H1 (cell line): ENCODE measurements at regions of chr12 and their contacts with region 1.

Region 1: DNA sequence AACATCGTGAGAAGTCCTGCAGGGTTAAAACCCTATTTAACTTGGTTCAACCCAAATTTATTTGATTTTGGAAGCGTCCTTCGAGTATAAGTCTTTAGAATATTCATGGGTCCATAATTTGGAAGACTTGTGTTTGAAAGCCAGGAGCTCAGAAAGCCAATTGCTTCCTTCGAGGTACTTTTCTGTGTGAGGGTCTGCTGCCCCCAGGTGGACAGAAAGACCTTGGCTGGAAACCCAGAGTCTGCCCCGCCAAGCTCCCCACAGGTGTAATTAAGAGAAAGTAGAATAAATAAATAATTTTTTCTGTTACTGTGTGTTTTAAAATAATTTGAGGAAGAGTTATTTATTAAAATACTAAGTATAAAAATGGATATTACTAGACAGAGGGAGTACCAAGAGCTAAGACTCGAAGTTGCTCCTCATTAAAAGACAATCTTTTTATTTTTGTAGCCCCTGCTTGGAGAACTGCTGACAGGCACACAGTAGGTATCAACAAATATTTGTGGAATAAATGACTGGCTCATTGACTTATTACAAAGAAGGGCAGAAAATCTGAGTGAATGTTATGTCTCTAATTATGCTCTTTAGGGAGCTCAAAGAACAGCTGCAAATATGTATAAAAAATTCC is 105.8 kb downstream of the PAH start:
- DNase-seq: peak in 1 of 2 experiments; percentile 66
- H3K4me3 ChIP-seq: no peak overlapping the region
- H3K27ac ChIP-seq: no peak overlapping the region
- H3K4me1 ChIP-seq: peaks cover 0 to 3% (median 1%) of the 10 kb centered on the region in 4 experiments; a peak in 4 of 7 replicates
- H3K27me3 ChIP-seq: no peaks in the 10 kb centered on the region
- CTCF ChIP-seq: peak; percentile 61 to 75 (median 61)
- EP300 ChIP-seq: no peak
- POLR2A ChIP-seq: no peak
- RAD21 ChIP-seq: peak; percentile 87 to 89

Region 2: DNA sequence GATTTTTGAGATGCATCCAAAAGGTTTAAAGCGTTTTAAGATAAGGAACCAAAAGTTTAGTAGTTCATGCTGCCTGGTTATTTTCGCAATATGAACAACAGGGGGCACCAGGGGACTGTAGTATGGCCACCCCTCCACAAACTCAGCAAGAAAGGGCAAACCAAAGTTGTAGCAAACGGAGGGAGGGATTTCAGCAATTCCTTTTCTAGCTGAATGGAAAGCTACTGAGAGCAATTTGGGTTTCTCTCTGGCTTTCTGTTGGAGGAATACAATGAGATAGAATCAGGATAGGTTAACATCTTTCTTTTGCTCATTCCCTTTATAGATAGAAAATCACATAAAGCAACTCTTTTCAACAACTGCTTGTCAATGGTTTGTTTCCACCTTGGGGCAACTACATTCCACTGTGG is 871.4 kb before region 1 on chr12:
- CTCF ChIA-PET with region 1: interaction called, 24 read pairs
- POLR2A ChIA-PET with region 1: no interaction called
- DNase-seq: peak; percentile 41 to 55
- H3K4me3 ChIP-seq: no peak overlapping the region
- H3K27ac ChIP-seq: no peak overlapping the region
- H3K4me1 ChIP-seq: no peaks in the 10 kb centered on the region
- H3K27me3 ChIP-seq: no peaks in the 10 kb centered on the region; a peak in 1 of 7 replicates
- CTCF ChIP-seq: peak; percentile 36 to 79 (median 79)
- EP300 ChIP-seq: no peak
- POLR2A ChIP-seq: no peak
- RAD21 ChIP-seq: peak; percentile 94 to 95

Region 3: GRCh38 chr12:102643879-102644575 is 167.2 kb before region 1 on chr12:
- CTCF ChIA-PET with region 1: no interaction called
- POLR2A ChIA-PET with region 1: no interaction called
- DNase-seq: no peak
- H3K4me3 ChIP-seq: no peak overlapping the region
- H3K27ac ChIP-seq: no peak overlapping the region
- H3K4me1 ChIP-seq: peaks cover 0 to 3% (median 0%) of the 10 kb centered on the region in 4 experiments; a peak in 1 of 7 replicates
- H3K27me3 ChIP-seq: no peaks in the 10 kb centered on the region
- CTCF ChIP-seq: no peak
- EP300 ChIP-seq: no peak
- POLR2A ChIP-seq: no peak
- RAD21 ChIP-seq: no peak

Region 4: GRCh38 chr12:102763061-102763460 is 48.2 kb before region 1 on chr12:
- CTCF ChIA-PET with region 1: interaction called, 10 read pairs
- POLR2A ChIA-PET with region 1: no interaction called
- DNase-seq: no peak
- H3K4me3 ChIP-seq: no peak overlapping the region
- H3K27ac ChIP-seq: no peak overlapping the region
- H3K4me1 ChIP-seq: no peaks in the 10 kb centered on the region
- H3K27me3 ChIP-seq: no peaks in the 10 kb centered on the region
- CTCF ChIP-seq: no peak
- EP300 ChIP-seq: no peak
- POLR2A ChIP-seq: no peak
- RAD21 ChIP-seq: no peak

Region 5: GRCh38 chr12:102776041-102776440 is 35.2 kb before region 1 on chr12:
- CTCF ChIA-PET with region 1: interaction called, 25 read pairs
- POLR2A ChIA-PET with region 1: no interaction called
- DNase-seq: no peak
- H3K4me3 ChIP-seq: no peak overlapping the region
- H3K27ac ChIP-seq: no peak overlapping the region
- H3K4me1 ChIP-seq: no peaks in the 10 kb centered on the region
- H3K27me3 ChIP-seq: no peaks in the 10 kb centered on the region
- CTCF ChIP-seq: no peak
- EP300 ChIP-seq: no peak
- POLR2A ChIP-seq: no peak
- RAD21 ChIP-seq: no peak

Region 6: GRCh38 chr12:102847131-102847530 is 35.9 kb after region 1 on chr12:
- CTCF ChIA-PET with region 1: interaction called, 16 read pairs
- POLR2A ChIA-PET with region 1: no interaction called
- DNase-seq: no peak
- H3K4me3 ChIP-seq: no peak overlapping the region
- H3K27ac ChIP-seq: no peak overlapping the region
- H3K4me1 ChIP-seq: no peaks in the 10 kb centered on the region
- H3K27me3 ChIP-seq: no peaks in the 10 kb centered on the region
- CTCF ChIP-seq: no peak
- EP300 ChIP-seq: no peak
- POLR2A ChIP-seq: no peak
- RAD21 ChIP-seq: no peak